Astrocyte of the cerebellum (primary cell): ENCODE measurements at regions of chr6 and their contacts with region 1.

Region 1: GRCh38 chr6:79431537-79431933 is 105.7 kb downstream of the LCA5 start:
- DNase-seq: no peak
- H3K4me3 ChIP-seq: no peak overlapping the region
- CTCF ChIP-seq: no peak

Region 2: DNA sequence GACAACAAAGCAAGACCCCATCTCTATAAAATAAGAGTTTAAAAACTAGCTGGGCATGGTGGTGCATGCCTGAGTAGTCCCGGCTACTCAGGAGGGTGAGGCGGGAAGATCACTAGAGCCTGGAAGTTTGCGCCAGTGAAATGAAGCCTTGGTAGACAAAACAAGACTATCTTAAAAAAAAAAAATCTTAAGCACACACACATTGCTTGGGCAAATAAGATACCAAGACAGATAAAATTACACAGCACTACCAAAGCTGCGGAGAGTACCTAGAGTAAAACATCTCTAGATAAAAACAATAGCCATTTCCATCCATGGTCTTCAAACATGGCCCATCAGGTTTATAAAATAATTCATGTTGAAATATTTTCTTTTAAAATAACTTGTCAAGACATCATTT is 62.5 kb after region 1 on chr6:
- in situ Hi-C with region 1: loop called (anchors 10 kb)
- DNase-seq: no peak
- H3K4me3 ChIP-seq: no peak overlapping the region
- CTCF ChIP-seq: no peak

Region 3: GRCh38 chr6:79525272-79526100 is 94.0 kb after region 1 on chr6:
- in situ Hi-C with region 1: no loop called
- DNase-seq: no peak
- H3K4me3 ChIP-seq: no peak overlapping the region
- CTCF ChIP-seq: no peak